Sigmoid colon (tissue), 7 donors: ENCODE measurements at regions of chr11 and their contacts with region 1.

Region 1: GRCh38 chr11:67606492-67607201 is at the start of gene NDUFV1:
- DNase-seq: peak; percentile 98
- H3K4me3 ChIP-seq: peak within 1 kb of the TSS; percentile 86 to 100 (median 94)
- H3K27ac ChIP-seq: peak within 1 kb of the TSS; percentile 85 to 94 (median 88)
- H3K4me1 ChIP-seq: peaks cover 0 to 20% (median 19%) of the 10 kb centered on the region in 4 donors
- H3K27me3 ChIP-seq: no peaks in the 10 kb centered on the region
- CTCF ChIP-seq: peak; percentile 55 to 77 (median 58)
- EP300 ChIP-seq: peak in 1 of 4 donors; percentile 33
- POLR2A ChIP-seq: peak; percentile 54 to 63
- total RNA-seq, gene NDUFV1: 152 to 286 (median 203) TPM

Region 2: GRCh38 chr11:67572747-67573419 is 33.8 kb before region 1 on chr11:
- intact Hi-C with region 1: loop called (anchors 1 kb)
- DNase-seq: peak; percentile 82
- H3K4me3 ChIP-seq: no peak overlapping the region
- H3K27ac ChIP-seq: no peak overlapping the region
- H3K4me1 ChIP-seq: no peaks in the 10 kb centered on the region
- H3K27me3 ChIP-seq: peaks cover 0 to 6% (median 0%) of the 10 kb centered on the region in 3 donors
- CTCF ChIP-seq: peak; percentile 52 to 71 (median 55)
- EP300 ChIP-seq: no peak
- POLR2A ChIP-seq: no peak

Region 3: GRCh38 chr11:67583247-67584204 is 23.1 kb before region 1 on chr11 and contains the start of gene GSTP1:
- intact Hi-C with region 1: loop called (anchors 1 kb)
- DNase-seq: peak; percentile 97
- H3K4me3 ChIP-seq: peak within 1 kb of the TSS; percentile 74 to 96 (median 80)
- H3K27ac ChIP-seq: peak within 1 kb of the TSS; percentile 95 to 99 (median 97)
- H3K4me1 ChIP-seq: peaks cover 0 to 25% (median 16%) of the 10 kb centered on the region in 4 donors
- H3K27me3 ChIP-seq: no peaks in the 10 kb centered on the region
- CTCF ChIP-seq: peak in 3 of 4 experiments; percentile 39 to 80 (median 51)
- EP300 ChIP-seq: peak in 1 of 4 donors; percentile 23
- POLR2A ChIP-seq: peak; percentile 91 to 92
- total RNA-seq, gene GSTP1: 349 to 702 (median 499) TPM

Region 4: DNA sequence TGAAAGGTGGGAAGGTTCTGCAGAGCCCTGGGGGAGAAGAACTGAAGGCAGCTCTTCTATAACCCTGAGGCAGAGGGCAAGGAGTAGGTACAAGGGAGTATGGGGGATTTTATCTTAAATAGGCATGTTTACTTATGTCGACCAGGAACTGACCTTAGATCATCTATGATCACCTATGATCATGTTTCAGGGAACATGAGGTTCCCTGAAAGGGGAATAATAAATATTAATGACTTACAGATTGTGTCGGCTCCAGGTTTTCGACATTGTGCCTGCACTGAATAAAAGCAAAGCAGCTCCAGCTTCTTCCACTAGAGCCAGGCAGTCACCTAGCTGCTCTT is 13.1 kb before region 1 on chr11:
- intact Hi-C with region 1: no loop called
- DNase-seq: no peak
- H3K4me3 ChIP-seq: no peak overlapping the region
- H3K27ac ChIP-seq: no peak overlapping the region
- H3K4me1 ChIP-seq: no peaks in the 10 kb centered on the region
- H3K27me3 ChIP-seq: no peaks in the 10 kb centered on the region
- CTCF ChIP-seq: no peak
- EP300 ChIP-seq: no peak
- POLR2A ChIP-seq: no peak

Region 5: GRCh38 chr11:67630228-67630942 is 23.7 kb after region 1 on chr11:
- intact Hi-C with region 1: loop called (anchors 2 kb)
- DNase-seq: peak; percentile 99
- H3K4me3 ChIP-seq: peak overlapping the region; percentile 63 to 78 (median 68)
- H3K27ac ChIP-seq: peak overlapping the region; percentile 95 to 98 (median 97)
- H3K4me1 ChIP-seq: peaks cover 0 to 29% (median 19%) of the 10 kb centered on the region in 4 donors
- H3K27me3 ChIP-seq: peaks cover 0 to 5% (median 0%) of the 10 kb centered on the region in 3 donors
- CTCF ChIP-seq: peak; percentile 60 to 80 (median 68)
- EP300 ChIP-seq: no peak
- POLR2A ChIP-seq: peak in 1 of 2 donors; percentile 64

Region 6: DNA sequence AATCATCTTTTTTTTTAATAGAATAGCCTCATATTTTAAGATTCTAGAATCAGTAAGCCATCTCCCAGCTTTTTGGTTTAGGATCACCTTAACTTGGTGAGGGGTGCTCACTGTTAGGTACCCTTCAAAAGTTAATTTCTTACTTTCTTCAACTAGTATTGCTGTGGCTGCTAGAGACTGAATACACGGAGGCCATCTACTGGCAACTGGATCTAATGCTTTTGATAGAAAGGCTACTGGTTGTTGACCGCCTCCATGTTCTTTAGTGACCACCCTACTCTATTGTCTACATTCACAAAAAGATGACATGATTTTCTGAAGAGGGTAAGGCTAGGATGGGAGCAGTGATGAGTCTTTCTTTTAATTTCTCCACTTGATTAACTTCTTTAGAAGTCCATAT is 84.5 kb after region 1 on chr11:
- intact Hi-C with region 1: no loop called
- DNase-seq: no peak
- H3K4me3 ChIP-seq: no peak overlapping the region
- H3K27ac ChIP-seq: no peak overlapping the region
- H3K4me1 ChIP-seq: no peaks in the 10 kb centered on the region
- H3K27me3 ChIP-seq: no peaks in the 10 kb centered on the region
- CTCF ChIP-seq: no peak
- EP300 ChIP-seq: no peak
- POLR2A ChIP-seq: no peak